ENCODE measurements at regions of chr3 and their contacts with region 1.

Region 1: DNA sequence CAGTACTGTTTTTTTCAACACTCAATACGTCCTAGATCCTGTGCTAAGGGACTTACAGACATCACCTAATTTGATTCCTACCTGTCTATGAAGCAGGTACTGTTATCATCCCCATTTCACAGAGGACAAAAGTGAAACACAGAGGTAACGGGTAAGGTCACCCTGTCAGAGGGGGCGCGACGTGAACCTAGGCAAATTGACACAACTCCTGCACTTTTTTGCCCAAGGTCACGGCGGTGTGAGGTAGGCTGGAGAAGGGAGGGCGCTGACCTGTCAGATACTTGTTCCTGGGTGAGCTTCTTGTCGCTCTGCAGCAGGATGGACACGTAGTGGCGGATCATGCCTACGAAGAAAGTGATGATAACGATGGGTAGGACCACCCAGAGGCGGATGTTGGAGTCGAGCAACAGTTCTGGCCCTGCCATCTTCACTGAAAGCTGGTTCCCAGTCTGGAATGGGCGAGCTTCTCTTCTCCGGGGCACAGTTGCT is 360 bp downstream of the EMC3 start:
- DNase-seq: no peak
- ATAC-seq: peak; percentile 44
- H3K4me3 ChIP-seq: peak overlapping the region; percentile 99
- H3K4me3 Mint-ChIP-seq: peak overlapping the region; percentile 96
- H3K27ac ChIP-seq: peak overlapping the region; percentile 75 to 94
- H3K27ac Mint-ChIP-seq: peak overlapping the region; percentile 98
- H3K4me1 ChIP-seq: peaks cover 27% of the 10 kb centered on the region
- H3K4me1 Mint-ChIP-seq: peaks cover 27% of the 10 kb centered on the region
- H3K27me3 ChIP-seq: no peaks in the 10 kb centered on the region
- H3K27me3 Mint-ChIP-seq: no peaks in the 10 kb centered on the region
- CTCF ChIP-seq: no peak

Region 2: GRCh38 chr3:9946112-9947024 is 39.9 kb before region 1 on chr3:
- CTCF ChIA-PET with region 1: no interaction called
- POLR2A ChIA-PET with region 1: interaction called, 16 read pairs
- intact Hi-C with region 1: no loop called
- DNase-seq: peak; percentile 65 to 91 (median 78)
- ATAC-seq: peak; percentile 93
- H3K4me3 ChIP-seq: peak overlapping the region; percentile 59
- H3K4me3 Mint-ChIP-seq: peak overlapping the region; percentile 62
- H3K27ac ChIP-seq: peak overlapping the region; percentile 47 to 55
- H3K27ac Mint-ChIP-seq: peak overlapping the region; percentile 70
- H3K4me1 ChIP-seq: peaks cover 16% of the 10 kb centered on the region
- H3K4me1 Mint-ChIP-seq: peaks cover 7% of the 10 kb centered on the region
- H3K27me3 ChIP-seq: no peaks in the 10 kb centered on the region
- H3K27me3 Mint-ChIP-seq: no peaks in the 10 kb centered on the region
- CTCF ChIP-seq: peak; percentile 34

Region 3: GRCh38 chr3:10115326-10116137 is 129.3 kb after region 1 on chr3 and contains the start of gene BRK1:
- CTCF ChIA-PET with region 1: no interaction called
- POLR2A ChIA-PET with region 1: interaction called, 3 read pairs
- intact Hi-C with region 1: loop called in 1 of 2 experiments (anchors 2 kb)
- DNase-seq: peak; percentile 83 to 98 (median 92)
- ATAC-seq: peak; percentile 97
- H3K4me3 ChIP-seq: peak within 1 kb of the TSS; percentile 98
- H3K4me3 Mint-ChIP-seq: peak within 1 kb of the TSS; percentile 95
- H3K27ac ChIP-seq: peak within 1 kb of the TSS; percentile 64 to 74
- H3K27ac Mint-ChIP-seq: peak within 1 kb of the TSS; percentile 88
- H3K4me1 ChIP-seq: peaks cover 41% of the 10 kb centered on the region
- H3K4me1 Mint-ChIP-seq: peaks cover 36% of the 10 kb centered on the region
- H3K27me3 ChIP-seq: no peaks in the 10 kb centered on the region
- H3K27me3 Mint-ChIP-seq: no peaks in the 10 kb centered on the region
- CTCF ChIP-seq: no peak
- total RNA-seq, gene BRK1: 33.1 to 33.8 TPM

Region 4: DNA sequence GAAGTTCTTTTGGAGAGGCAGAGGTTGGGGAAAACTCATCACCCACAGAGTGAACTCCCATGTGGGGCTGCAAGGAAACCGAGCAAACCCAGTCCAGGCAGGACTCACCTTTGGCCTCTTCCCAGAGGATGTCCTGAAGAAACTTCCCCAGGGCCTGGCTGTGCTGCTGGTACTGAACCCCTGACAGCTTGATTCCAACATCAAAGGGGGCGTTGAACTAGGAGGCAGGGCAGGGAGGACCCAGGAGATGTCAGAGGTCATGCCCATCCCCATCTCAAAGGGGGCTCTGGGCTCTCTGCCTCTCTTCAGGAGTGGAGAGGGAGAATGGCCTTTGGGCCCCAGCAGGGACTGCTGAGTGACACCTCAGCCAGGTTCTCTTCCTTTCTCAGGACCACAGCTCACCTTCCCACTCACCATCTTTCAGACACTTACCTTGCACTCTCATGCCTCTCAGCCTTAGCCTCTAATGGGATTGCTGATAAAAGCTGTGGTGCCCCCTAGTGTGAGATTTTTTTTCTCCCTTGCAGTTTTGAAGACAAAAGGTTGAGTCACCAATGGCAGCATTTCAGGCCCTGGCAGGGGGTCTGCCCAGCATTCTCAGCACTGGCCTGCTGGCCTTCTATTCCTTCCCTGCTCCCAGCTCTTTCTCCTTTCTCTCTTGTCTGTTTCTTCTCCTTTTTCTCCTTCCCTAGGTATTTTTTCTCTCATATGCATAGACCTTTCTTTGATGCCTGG is 300.5 kb after region 1 on chr3:
- CTCF ChIA-PET with region 1: interaction called, 3 read pairs
- POLR2A ChIA-PET with region 1: no interaction called
- intact Hi-C with region 1: loop called in 1 of 2 experiments (anchors 10 kb)
- DNase-seq: peak in 5 of 14 experiments; percentile 28 to 71 (median 61)
- ATAC-seq: peak; percentile 39
- H3K4me3 ChIP-seq: no peak overlapping the region
- H3K4me3 Mint-ChIP-seq: no peak overlapping the region
- H3K27ac ChIP-seq: peak overlapping the region in 1 of 2 donors; percentile 21
- H3K27ac Mint-ChIP-seq: peak overlapping the region; percentile 50
- H3K4me1 ChIP-seq: peaks cover 19% of the 10 kb centered on the region
- H3K4me1 Mint-ChIP-seq: peaks cover 39% of the 10 kb centered on the region
- H3K27me3 ChIP-seq: no peaks in the 10 kb centered on the region
- H3K27me3 Mint-ChIP-seq: no peaks in the 10 kb centered on the region
- CTCF ChIP-seq: peak; percentile 52